CD8-positive, alpha-beta T cell (primary cell): ENCODE measurements at regions of chr20 and their contacts with region 1.

Region 1: GRCh38 chr20:25195014-25195961 is at the start of gene ENTPD6:
- DNase-seq: peak; percentile 86 to 98 (median 94)
- ATAC-seq: peak; percentile 79
- H3K4me3 ChIP-seq: peak within 1 kb of the TSS; percentile 87 to 94
- H3K4me3 Mint-ChIP-seq: peak within 1 kb of the TSS; percentile 88
- H3K27ac ChIP-seq: peak within 1 kb of the TSS; percentile 90 to 95
- H3K27ac Mint-ChIP-seq: peak within 1 kb of the TSS; percentile 95
- H3K4me1 ChIP-seq: peaks cover 29% of the 10 kb centered on the region
- H3K4me1 Mint-ChIP-seq: peaks cover 49% of the 10 kb centered on the region
- H3K27me3 ChIP-seq: no peaks in the 10 kb centered on the region
- H3K27me3 Mint-ChIP-seq: no peaks in the 10 kb centered on the region
- CTCF ChIP-seq: no peak
- total RNA-seq, gene ENTPD6: 62.4 to 70.1 TPM

Region 2: GRCh38 chr20:24948939-24949679 is 246.2 kb before region 1 on chr20 and contains the start of gene CST7:
- CTCF ChIA-PET with region 1: no interaction called
- POLR2A ChIA-PET with region 1: no interaction called
- intact Hi-C with region 1: loop called (anchors 1 to 5 kb)
- DNase-seq: peak; percentile 76 to 96 (median 87)
- ATAC-seq: peak; percentile 90
- H3K4me3 ChIP-seq: peak within 1 kb of the TSS; percentile 55 to 90
- H3K4me3 Mint-ChIP-seq: peak within 1 kb of the TSS; percentile 86
- H3K27ac ChIP-seq: peak within 1 kb of the TSS; percentile 73 to 95
- H3K27ac Mint-ChIP-seq: peak within 1 kb of the TSS; percentile 93
- H3K4me1 ChIP-seq: peaks cover 23% of the 10 kb centered on the region
- H3K4me1 Mint-ChIP-seq: peaks cover 63% of the 10 kb centered on the region
- H3K27me3 ChIP-seq: no peaks in the 10 kb centered on the region
- H3K27me3 Mint-ChIP-seq: no peaks in the 10 kb centered on the region
- CTCF ChIP-seq: no peak
- total RNA-seq, gene CST7: 53.3 to 54.6 TPM

Region 3: DNA sequence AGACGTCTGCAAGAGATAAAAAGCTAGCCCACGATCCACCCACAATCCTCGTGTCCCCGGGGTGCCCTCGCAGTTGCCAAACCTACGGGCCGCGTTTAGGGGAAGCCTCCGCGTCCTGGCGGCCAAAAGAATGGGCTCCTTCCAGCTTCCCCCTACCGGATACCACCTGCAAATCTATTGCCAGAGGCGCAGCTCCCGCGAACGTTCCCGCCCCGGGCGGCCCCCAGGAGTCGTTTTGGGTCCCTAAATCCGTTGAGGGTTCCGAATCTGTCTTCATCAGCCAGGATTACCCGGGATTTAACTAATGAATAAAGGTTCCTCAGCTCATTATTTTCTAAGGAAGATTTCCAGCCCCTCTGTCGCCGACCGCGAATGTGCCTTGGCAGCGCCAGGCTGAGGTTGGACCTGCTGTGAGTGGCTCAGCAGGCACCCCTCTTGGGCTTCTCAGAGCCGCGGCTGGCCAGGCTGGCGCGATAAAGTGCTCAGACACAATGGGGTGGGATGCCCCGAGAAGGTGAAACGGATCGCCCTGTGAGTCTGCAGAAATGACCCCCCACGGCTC is 110.6 kb before region 1 on chr20:
- CTCF ChIA-PET with region 1: no interaction called
- POLR2A ChIA-PET with region 1: interaction called, 13 read pairs
- intact Hi-C with region 1: loop called in 1 of 2 experiments (anchors 5 kb)
- DNase-seq: peak in 3 of 9 experiments; percentile 26 to 49 (median 36)
- ATAC-seq: peak; percentile 23
- H3K4me3 ChIP-seq: no peak overlapping the region
- H3K4me3 Mint-ChIP-seq: peak overlapping the region; percentile 51
- H3K27ac ChIP-seq: no peak overlapping the region
- H3K27ac Mint-ChIP-seq: no peak overlapping the region
- H3K4me1 ChIP-seq: peaks cover 28% of the 10 kb centered on the region
- H3K4me1 Mint-ChIP-seq: peaks cover 30% of the 10 kb centered on the region
- H3K27me3 ChIP-seq: peaks cover 33 to 40% of the 10 kb centered on the region in 2 experiments
- H3K27me3 Mint-ChIP-seq: peaks cover 47% of the 10 kb centered on the region
- CTCF ChIP-seq: no peak

Region 4: DNA sequence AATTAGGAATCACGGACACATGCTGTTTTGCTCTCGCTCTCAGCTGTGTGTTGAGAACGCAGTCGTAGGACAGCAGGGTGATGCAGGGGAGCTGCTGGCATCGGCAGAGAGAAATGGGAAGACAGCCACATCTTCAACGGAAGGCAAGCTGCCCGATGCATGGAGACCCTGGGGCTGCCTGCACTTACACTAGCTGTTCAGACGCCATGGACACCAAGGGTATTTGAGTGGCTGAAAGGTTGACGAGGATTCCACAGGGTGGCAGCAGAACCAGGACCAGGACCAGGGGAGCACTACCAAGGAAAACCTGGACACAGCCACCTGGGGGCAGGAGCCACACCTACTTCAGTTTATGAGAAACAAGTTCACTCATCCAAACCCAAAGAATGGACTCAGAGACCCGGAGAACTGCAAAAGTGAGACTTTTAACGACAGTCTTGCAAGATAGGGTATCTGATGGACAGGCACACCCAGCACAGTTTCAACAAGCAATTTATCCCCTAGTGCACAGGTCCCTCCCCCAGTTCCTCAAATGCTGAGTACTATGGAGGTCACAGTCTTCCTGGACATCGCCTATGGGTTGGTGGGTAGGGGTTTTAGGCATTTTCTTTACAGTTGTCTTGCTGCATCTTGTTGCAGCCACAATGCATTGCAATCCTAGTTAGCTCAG is 56.1 kb before region 1 on chr20:
- CTCF ChIA-PET with region 1: no interaction called
- POLR2A ChIA-PET with region 1: no interaction called
- intact Hi-C with region 1: loop called in 1 of 2 experiments (anchors 1 kb)
- DNase-seq: peak in 1 of 9 experiments; percentile 12
- ATAC-seq: no peak
- H3K4me3 ChIP-seq: no peak overlapping the region
- H3K4me3 Mint-ChIP-seq: no peak overlapping the region
- H3K27ac ChIP-seq: no peak overlapping the region
- H3K27ac Mint-ChIP-seq: no peak overlapping the region
- H3K4me1 ChIP-seq: no peaks in the 10 kb centered on the region
- H3K4me1 Mint-ChIP-seq: no peaks in the 10 kb centered on the region
- H3K27me3 ChIP-seq: no peaks in the 10 kb centered on the region
- H3K27me3 Mint-ChIP-seq: peaks cover 2% of the 10 kb centered on the region
- CTCF ChIP-seq: no peak

Region 5: GRCh38 chr20:25178563-25179438 is 16.5 kb before region 1 on chr20:
- CTCF ChIA-PET with region 1: interaction called, 5 read pairs
- POLR2A ChIA-PET with region 1: no interaction called
- intact Hi-C with region 1: loop called in 1 of 2 experiments (anchors 2 kb)
- DNase-seq: peak in 3 of 9 experiments; percentile 8 to 67 (median 56)
- ATAC-seq: peak; percentile 71
- H3K4me3 ChIP-seq: no peak overlapping the region
- H3K4me3 Mint-ChIP-seq: no peak overlapping the region
- H3K27ac ChIP-seq: no peak overlapping the region
- H3K27ac Mint-ChIP-seq: no peak overlapping the region
- H3K4me1 ChIP-seq: no peaks in the 10 kb centered on the region
- H3K4me1 Mint-ChIP-seq: no peaks in the 10 kb centered on the region
- H3K27me3 ChIP-seq: no peaks in the 10 kb centered on the region
- H3K27me3 Mint-ChIP-seq: peaks cover 4% of the 10 kb centered on the region
- CTCF ChIP-seq: peak; percentile 77

Region 6: DNA sequence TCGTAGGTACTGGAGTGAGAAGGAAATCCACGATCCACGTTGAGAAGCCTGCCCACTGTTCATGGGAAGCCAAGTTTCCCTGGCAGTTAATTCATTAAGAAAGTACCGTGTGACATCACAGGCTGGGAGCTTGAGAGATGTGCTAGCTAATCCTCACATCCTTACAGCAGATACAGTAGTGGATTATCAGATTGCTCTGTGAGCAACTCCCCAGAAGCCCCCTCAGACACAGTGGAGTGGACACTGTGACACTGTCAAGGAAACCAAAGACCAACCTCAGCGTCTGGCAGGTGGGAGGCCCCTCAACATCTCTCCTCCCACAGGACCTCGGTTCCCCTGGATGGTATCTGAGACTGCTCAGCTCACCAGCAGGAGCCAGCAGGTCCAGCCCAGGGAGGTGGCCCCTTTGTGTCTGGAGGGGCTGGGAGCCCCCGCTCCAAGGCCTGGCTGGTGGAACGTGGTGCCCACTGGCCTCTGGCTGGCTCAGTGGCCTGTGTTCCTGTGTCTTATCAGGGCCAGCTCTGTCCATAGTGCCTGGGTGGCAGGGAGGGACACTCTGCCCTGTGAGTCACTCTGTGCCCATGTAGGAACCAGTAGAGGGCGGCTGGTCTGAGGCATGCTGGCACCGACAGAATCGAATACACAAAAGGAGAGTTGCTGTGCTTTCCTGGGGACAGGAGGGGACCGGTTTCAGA is 59.8 kb after region 1 on chr20:
- CTCF ChIA-PET with region 1: no interaction called
- POLR2A ChIA-PET with region 1: interaction called, 14 read pairs
- intact Hi-C with region 1: no loop called
- DNase-seq: peak in 1 of 9 experiments; percentile 39
- ATAC-seq: no peak
- H3K4me3 ChIP-seq: no peak overlapping the region
- H3K4me3 Mint-ChIP-seq: no peak overlapping the region
- H3K27ac ChIP-seq: no peak overlapping the region
- H3K27ac Mint-ChIP-seq: peak overlapping the region; percentile 62
- H3K4me1 ChIP-seq: peaks cover 31% of the 10 kb centered on the region
- H3K4me1 Mint-ChIP-seq: peaks cover 78% of the 10 kb centered on the region
- H3K27me3 ChIP-seq: no peaks in the 10 kb centered on the region
- H3K27me3 Mint-ChIP-seq: no peaks in the 10 kb centered on the region
- CTCF ChIP-seq: no peak

Region 7: DNA sequence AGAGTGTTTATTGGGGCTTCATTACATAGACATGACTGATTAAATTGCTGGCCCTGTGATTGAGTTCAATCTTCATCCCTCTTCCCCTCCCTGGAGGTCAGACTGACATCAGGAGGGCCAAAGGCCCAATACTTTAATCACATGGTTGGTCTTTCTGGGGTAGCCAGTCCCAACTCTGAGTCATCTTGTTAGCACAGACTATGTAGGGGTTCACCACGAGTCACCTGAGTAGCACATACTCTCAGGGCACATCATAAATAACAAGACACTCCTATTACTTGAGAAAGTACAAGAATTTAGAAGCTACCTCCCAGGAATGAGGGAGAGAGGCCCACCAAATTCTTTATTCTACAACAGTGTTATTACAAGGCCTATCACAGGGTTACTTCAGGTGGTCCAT is 223.5 kb after region 1 on chr20:
- CTCF ChIA-PET with region 1: no interaction called
- POLR2A ChIA-PET with region 1: no interaction called
- intact Hi-C with region 1: no loop called
- DNase-seq: no peak
- ATAC-seq: no peak
- H3K4me3 ChIP-seq: no peak overlapping the region
- H3K4me3 Mint-ChIP-seq: no peak overlapping the region
- H3K27ac ChIP-seq: no peak overlapping the region
- H3K27ac Mint-ChIP-seq: no peak overlapping the region
- H3K4me1 ChIP-seq: no peaks in the 10 kb centered on the region
- H3K4me1 Mint-ChIP-seq: no peaks in the 10 kb centered on the region
- H3K27me3 ChIP-seq: no peaks in the 10 kb centered on the region
- H3K27me3 Mint-ChIP-seq: no peaks in the 10 kb centered on the region
- CTCF ChIP-seq: no peak

Region 8: DNA sequence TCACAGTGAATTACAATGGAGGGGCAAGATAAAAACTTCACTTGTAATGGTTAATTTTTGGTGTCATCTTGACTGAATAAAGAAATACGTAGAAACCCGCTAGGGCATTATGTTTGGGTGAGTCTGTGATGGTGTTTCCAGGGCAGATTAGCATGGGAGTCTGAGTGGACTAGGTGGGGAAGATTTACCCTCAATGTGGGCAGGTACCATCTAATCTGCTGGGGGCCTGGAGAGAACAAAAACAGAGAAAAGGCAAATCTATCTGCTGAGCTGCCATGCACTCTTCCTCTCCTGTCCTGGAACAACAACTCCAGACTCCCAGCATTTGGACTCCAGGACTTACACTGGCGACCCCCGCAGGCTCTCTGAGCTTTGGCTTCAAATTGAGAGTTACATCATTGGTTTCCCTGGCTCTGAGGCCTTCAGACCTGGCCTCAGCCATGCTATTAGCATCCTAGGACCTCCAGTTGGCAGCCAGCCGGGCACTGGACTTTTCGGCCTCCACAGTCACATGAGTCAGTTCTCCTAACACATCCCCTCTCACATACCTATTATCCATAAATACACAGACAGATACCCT is 370.4 kb after region 1 on chr20:
- CTCF ChIA-PET with region 1: no interaction called
- POLR2A ChIA-PET with region 1: no interaction called
- intact Hi-C with region 1: no loop called
- DNase-seq: no peak
- ATAC-seq: no peak
- H3K4me3 ChIP-seq: no peak overlapping the region
- H3K4me3 Mint-ChIP-seq: no peak overlapping the region
- H3K27ac ChIP-seq: no peak overlapping the region
- H3K27ac Mint-ChIP-seq: no peak overlapping the region
- H3K4me1 ChIP-seq: no peaks in the 10 kb centered on the region
- H3K4me1 Mint-ChIP-seq: peaks cover 2% of the 10 kb centered on the region
- H3K27me3 ChIP-seq: no peaks in the 10 kb centered on the region
- H3K27me3 Mint-ChIP-seq: no peaks in the 10 kb centered on the region
- CTCF ChIP-seq: no peak

Region 9: DNA sequence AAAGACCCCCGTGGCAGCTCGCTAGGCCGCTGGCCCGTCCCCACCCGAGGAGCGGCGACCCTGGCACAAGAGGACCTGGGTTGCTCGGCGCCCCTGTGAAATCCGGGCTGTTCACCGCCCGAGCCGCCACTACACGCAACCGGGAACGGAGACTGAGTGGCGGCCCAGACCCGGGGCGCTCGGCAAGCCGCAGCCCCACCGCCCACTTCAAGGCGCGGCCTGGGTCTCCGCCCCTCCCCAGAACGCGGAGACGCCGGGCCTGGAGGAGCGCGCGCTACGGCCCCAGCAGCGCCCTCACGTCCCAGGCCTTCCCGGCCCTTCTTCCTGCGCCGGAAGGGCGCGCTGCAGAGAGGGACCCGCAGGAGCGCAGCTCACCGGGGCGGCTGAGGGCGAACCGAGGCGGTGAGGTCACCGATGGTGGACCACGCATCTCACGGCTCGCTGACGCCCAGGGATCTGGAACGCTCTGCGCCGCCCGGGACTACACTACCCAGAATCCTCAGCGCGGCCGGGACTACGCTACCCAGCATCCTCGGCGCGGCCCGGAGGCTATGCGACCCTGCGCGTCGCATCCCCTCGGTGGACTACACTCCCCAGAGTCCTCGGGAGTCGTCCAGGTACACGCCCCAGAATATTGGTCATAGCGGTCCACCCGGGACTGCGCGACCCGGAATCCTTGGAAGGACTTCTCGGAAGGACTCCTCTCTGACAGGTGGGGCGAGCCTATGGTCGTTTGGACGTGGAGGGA is 501.3 kb after region 1 on chr20 and contains the start of gene ZNF337:
- CTCF ChIA-PET with region 1: no interaction called
- POLR2A ChIA-PET with region 1: no interaction called
- intact Hi-C with region 1: loop called in 1 of 2 experiments (anchors 5 kb)
- DNase-seq: peak; percentile 85 to 95 (median 92)
- ATAC-seq: peak; percentile 98
- H3K4me3 ChIP-seq: peak within 1 kb of the TSS; percentile 62 to 78
- H3K4me3 Mint-ChIP-seq: peak within 1 kb of the TSS; percentile 95
- H3K27ac ChIP-seq: peak within 1 kb of the TSS; percentile 73 to 75
- H3K27ac Mint-ChIP-seq: peak within 1 kb of the TSS; percentile 93
- H3K4me1 ChIP-seq: peaks cover 8% of the 10 kb centered on the region
- H3K4me1 Mint-ChIP-seq: peaks cover 42% of the 10 kb centered on the region
- H3K27me3 ChIP-seq: no peaks in the 10 kb centered on the region
- H3K27me3 Mint-ChIP-seq: no peaks in the 10 kb centered on the region
- CTCF ChIP-seq: no peak
- total RNA-seq, gene ZNF337: 21.5 TPM